ENCODE measurements at regions of chr4 and their contacts with region 1.

Region 1: GRCh38 chr4:107666134-107666533 is 53.9 kb downstream of the PAPSS1 start:
- DNase-seq: no peak
- H3K4me3 Mint-ChIP-seq: no peak overlapping the region
- H3K27ac Mint-ChIP-seq: no peak overlapping the region
- H3K4me1 Mint-ChIP-seq: no peaks in the 10 kb centered on the region
- H3K27me3 Mint-ChIP-seq: no peaks in the 10 kb centered on the region
- CTCF ChIP-seq: no peak

Region 2: GRCh38 chr4:107044170-107044569 is 622.0 kb before region 1 on chr4:
- CTCF ChIA-PET with region 1: no interaction called
- intact Hi-C with region 1: loop called (anchors 5 kb)
- DNase-seq: no peak
- H3K4me3 Mint-ChIP-seq: no peak overlapping the region
- H3K27ac Mint-ChIP-seq: no peak overlapping the region
- H3K4me1 Mint-ChIP-seq: no peaks in the 10 kb centered on the region
- H3K27me3 Mint-ChIP-seq: no peaks in the 10 kb centered on the region
- CTCF ChIP-seq: no peak

Region 3: DNA sequence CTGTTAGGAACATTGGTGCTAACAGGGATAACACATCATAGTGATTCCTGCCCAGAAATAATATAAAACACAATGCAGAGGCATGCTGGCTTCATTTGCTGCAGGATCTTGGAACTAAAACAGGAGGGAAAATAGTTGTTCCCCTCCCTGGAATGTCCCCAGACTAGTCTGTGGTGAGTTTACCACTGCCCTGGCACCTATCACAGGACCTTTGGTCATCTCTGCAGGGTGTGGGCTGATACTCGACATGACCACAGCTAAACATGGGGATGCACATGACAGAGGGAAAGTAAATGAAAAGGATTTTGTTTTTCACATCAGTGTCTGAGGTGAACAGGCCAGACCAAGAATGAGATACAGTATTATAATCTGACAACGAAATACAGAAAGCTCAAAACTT is 469.8 kb before region 1 on chr4:
- CTCF ChIA-PET with region 1: no interaction called
- intact Hi-C with region 1: loop called (anchors 10 kb)
- DNase-seq: no peak
- H3K4me3 Mint-ChIP-seq: no peak overlapping the region
- H3K27ac Mint-ChIP-seq: no peak overlapping the region
- H3K4me1 Mint-ChIP-seq: no peaks in the 10 kb centered on the region
- H3K27me3 Mint-ChIP-seq: no peaks in the 10 kb centered on the region
- CTCF ChIP-seq: no peak

Region 4: GRCh38 chr4:107519053-107519452 is 147.1 kb before region 1 on chr4:
- CTCF ChIA-PET with region 1: no interaction called
- intact Hi-C with region 1: loop called (anchors 10 kb)
- DNase-seq: peak; percentile 27
- H3K4me3 Mint-ChIP-seq: no peak overlapping the region
- H3K27ac Mint-ChIP-seq: no peak overlapping the region
- H3K4me1 Mint-ChIP-seq: no peaks in the 10 kb centered on the region
- H3K27me3 Mint-ChIP-seq: no peaks in the 10 kb centered on the region
- CTCF ChIP-seq: no peak

Region 5: DNA sequence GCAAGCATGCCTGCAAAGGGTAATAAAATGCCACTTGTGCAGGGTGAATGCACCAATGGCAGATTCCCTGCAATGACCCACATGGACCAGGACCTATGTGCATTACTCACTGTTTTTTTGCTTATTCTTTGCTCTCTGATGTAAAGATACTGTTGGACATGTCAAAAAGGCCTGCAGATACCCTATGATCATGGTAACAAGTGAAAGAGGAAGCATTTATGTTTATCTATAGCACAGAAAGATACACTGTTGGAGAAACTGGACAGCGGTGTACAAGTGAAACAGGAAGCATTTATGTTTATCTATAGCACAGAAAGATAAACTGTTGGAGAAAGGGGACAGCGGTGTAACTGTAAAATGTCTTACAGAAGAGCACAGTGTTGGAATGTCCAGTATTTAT is 73.6 kb before region 1 on chr4:
- CTCF ChIA-PET with region 1: no interaction called
- intact Hi-C with region 1: no loop called
- DNase-seq: no peak
- H3K4me3 Mint-ChIP-seq: no peak overlapping the region
- H3K27ac Mint-ChIP-seq: no peak overlapping the region
- H3K4me1 Mint-ChIP-seq: no peaks in the 10 kb centered on the region
- H3K27me3 Mint-ChIP-seq: no peaks in the 10 kb centered on the region
- CTCF ChIP-seq: no peak

Measured in Calu3 (cell line).